ENCODE measurements at regions of chr20 and their contacts with region 1.

Region 1: DNA sequence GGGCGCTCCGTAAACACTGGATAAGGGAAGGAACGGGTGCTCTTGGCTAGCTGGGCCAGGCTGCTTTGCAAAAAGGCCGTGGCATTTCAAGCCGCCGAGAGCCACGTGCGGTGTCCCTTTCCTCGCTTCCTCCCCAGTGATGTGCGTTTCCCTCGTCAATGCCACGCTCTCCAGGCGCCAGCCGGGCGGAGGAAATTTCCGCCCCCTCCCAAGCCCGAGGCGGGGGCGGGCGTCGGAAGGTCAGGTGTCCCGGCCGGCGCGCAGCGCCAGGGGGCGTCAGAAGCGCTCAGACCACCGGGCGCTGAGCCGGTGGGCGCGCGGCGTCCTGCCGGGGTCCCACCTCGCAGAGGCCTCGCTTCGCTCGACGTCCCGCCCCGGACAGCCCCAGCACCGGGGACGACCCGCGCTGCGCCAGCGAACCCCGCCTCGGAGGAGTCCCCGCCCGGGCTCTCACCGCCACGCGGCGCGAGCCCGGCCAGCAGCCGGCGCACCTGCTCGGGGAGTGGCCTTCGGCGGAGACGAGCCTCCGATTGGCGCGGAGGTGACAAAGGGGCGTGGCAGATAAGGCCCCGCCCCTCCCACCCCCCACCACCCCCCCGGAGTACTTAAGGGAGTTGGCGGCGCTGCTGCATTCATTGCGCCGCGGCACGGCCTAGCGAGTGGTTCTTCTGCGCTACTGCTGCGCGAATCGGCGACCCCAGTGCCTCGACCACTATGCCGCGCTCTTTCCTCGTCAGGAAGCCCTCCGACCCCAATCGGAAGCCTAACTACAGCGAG is at the start of gene SNAI1:
- DNase-seq: peak; percentile 85
- ATAC-seq: peak; percentile 89 to 91
- total RNA-seq, gene SNAI1: 2.7 to 8.5 TPM

Region 2: DNA sequence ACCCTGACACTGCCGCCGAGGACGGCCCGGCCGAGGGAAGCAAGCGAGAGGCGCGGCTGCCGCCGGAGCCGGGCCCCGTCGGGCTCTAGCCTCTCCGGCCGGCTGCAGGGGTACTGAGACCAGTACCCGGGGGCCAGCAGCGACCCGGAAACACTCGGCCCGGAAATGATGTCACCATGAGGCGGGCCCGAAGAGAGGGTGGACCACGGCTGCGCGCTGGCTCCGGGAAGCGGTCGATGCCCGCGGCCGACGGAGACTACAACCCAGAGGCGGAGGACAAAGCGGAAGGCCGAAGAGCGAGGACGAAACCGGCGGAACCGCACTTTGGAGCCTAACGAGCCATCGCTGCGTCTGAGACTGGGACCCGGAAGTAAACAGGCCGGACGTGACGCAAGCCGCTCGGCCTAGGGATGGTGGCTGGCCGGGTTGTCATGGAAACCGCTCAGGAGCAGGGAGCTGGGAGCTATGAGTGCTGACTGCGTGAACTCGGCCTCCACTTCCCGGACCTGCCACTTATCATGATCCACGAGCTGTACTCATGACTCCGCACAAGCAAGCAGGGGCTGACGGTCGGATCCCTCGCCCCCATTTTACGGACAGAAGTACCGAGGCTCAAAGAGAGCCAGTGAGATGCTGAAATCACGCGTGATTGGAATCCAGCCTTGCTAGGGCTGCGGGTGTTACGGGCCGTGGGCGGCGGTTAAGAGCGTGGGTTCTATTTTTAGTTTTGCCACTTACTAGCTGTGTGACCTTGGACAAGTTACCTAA is 67.0 kb before region 1 on chr20 and contains the start of gene SPATA2:
- intact Hi-C with region 1: no loop called
- DNase-seq: peak; percentile 99
- ATAC-seq: peak; percentile 96 to 97
- total RNA-seq, gene SPATA2: 6.5 to 6.8 TPM

Region 3: GRCh38 chr20:50034567-50035208 is 52.2 kb after region 1 on chr20:
- intact Hi-C with region 1: no loop called
- DNase-seq: peak; percentile 67
- ATAC-seq: peak; percentile 34 to 79

Region 4: GRCh38 chr20:50070991-50071888 is 88.7 kb after region 1 on chr20:
- intact Hi-C with region 1: loop called (anchors 1 to 2 kb)
- DNase-seq: peak; percentile 92
- ATAC-seq: peak; percentile 93 to 95

Region 5: DNA sequence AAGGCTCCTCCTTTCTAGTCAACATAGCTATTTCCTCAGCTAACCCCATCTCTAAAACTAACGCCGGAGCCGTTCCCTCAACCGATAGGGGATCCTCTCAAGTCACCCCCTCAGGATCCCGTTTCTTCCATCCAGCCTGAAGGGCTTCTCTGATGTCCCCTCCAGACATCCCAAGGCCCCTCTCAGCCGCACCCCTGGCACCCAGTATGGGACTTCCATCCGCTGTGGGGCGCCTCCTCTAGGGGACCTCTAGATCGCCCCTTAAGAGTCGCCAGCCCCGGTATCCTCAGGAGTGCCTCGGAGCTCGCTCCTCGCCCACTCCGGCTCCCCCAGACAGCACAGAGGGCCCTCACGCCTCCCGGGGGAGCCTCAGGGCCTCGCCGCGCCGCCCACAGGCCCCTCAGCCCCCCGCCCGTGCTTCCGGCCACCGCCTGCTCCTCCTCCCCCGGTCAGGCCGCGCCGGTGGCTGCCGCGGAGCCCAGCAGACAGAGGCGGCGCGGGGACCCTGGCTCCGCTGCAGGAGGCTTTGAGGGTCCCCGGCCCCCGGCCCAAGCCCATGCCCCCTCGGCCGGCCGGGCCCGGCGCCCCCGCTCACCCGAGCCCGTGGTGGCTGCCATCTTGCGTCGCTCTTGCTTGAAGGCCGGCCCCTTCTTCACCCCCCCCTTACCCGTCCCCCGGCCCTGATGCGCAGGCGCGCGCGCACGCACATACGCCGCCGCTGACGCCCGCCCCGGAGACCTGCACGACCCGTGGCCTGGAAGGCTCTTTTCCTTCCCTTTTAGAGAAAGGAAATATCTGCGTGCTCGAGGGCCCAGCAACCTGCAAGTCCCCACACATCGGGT is 130.2 kb after region 1 on chr20 and contains the start of gene UBE2V1:
- intact Hi-C with region 1: no loop called
- DNase-seq: peak; percentile 94
- ATAC-seq: peak; percentile 91 to 92
- total RNA-seq, gene UBE2V1: 77.4 to 109 TPM

Region 6: DNA sequence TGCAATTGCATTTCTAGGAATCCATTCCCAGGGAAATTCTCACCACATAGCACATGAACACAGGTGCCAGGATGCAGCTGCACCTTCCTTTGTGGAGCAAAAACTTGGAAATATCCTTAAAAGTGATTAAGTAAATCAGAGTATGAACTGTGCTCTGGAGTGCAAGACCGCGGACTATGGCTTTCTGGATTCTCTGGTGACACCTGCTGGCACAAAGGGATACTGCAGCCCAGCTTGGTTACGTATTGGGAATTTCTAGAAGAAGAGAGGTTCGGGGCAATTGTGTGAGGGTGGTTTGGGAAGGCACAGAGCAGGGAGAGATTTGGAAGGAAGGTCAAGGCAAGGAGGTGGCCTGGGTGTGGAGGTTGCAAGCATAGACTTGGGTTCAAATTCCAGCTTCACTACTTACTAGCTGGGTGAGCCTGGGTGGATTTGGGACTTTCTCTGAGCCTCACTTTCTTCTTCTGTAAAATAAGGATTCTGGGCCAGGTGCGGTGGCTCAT is 186.8 kb after region 1 on chr20:
- intact Hi-C with region 1: loop called (anchors 2 to 10 kb)
- DNase-seq: peak; percentile 74
- ATAC-seq: peak in 1 of 2 donors; percentile 3

Region 7: DNA sequence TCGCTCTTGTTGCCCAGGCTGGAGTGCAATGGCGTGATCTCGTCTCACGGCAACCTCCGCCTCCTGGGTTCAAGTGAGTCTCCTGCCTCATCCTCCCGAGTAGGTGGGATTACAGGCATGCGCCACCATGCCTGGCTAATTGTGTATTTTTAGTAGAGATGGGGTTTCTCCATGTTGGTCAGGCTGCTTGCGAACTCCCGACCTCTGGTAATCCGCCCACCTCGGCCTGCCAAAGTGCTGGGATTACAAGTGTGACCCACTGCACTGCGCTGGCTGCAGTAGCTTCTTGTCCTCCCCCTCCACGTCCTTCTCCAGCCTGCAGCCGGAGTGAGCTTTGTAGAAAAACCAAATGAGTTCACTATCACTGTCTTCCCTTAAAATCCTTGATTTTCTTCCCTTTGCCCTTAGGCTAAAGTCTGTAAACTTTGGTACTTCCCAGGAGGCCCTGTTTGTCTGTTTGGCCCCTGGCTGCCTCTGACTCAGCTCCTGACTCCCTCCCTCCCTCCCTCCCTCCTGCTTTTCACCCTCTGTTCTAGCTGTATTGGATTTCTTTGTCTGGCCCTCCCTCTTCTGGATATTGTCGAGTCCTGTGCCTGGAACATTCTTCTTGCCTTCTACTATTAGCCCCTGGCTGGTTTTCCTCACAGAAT is 761.7 kb after region 1 on chr20:
- intact Hi-C with region 1: no loop called
- DNase-seq: peak; percentile 38
- ATAC-seq: peak; percentile 93

Measured in left cardiac atrium (tissue), 4 donors.